ENCODE measurements at regions of chr14 and their contacts with region 1.

Region 1: GRCh38 chr14:54025661-54026060 is 69.0 kb upstream of the BMP4 start:
- DNase-seq: no peak
- H3K4me3 ChIP-seq: no peak overlapping the region
- H3K27ac ChIP-seq: no peak overlapping the region
- H3K27me3 ChIP-seq: no peaks in the 10 kb centered on the region
- CTCF ChIP-seq: peak; percentile 46

Region 2: DNA sequence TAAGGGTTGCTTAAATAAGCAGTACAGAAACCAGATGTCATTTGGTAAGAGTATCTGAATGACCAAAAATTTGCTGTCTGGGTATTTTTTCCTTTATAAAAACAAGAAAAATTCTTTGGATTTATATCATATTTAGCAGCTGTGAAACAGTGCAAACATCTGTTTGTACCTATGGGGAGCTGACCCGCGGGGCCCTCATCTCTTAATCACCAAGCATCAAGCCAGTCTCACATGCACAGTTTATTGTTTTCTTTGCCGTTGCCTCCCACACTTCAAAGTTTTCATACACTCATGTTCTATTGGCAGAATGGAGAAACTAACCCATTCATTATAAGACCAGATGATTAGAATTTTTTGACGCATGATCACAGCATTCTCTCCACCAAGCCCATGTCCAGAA is 211.3 kb before region 1 on chr14:
- CTCF ChIA-PET with region 1: no interaction called
- POLR2A ChIA-PET with region 1: no interaction called
- DNase-seq: no peak
- H3K4me3 ChIP-seq: no peak overlapping the region
- H3K27ac ChIP-seq: no peak overlapping the region
- H3K27me3 ChIP-seq: peaks cover under 1% of the 10 kb centered on the region
- CTCF ChIP-seq: no peak

Region 3: DNA sequence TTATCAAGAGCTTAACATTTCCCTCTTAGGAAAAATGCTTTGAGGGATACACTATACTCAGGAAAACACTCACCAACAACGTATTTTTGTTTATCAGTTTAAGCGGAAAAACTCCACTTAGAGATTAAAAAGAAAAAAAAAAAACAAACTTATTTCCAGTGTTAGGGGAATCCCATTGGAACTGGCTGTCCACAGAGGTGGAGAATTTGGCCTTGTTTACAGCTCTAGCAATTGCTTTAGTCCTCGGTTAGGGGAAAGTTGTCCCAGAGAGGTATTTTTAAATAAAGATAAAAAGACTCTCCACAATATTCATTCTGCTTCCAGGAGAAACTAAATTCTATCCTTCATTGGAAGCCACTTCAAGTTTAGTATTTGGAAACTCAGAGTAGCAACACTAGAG is 47.5 kb before region 1 on chr14:
- CTCF ChIA-PET with region 1: no interaction called
- POLR2A ChIA-PET with region 1: no interaction called
- DNase-seq: no peak
- H3K4me3 ChIP-seq: no peak overlapping the region
- H3K27ac ChIP-seq: no peak overlapping the region
- H3K27me3 ChIP-seq: peaks cover 9% of the 10 kb centered on the region
- CTCF ChIP-seq: no peak

Region 4: GRCh38 chr14:53999061-53999488 is 26.6 kb before region 1 on chr14:
- CTCF ChIA-PET with region 1: interaction called, 10 read pairs
- POLR2A ChIA-PET with region 1: no interaction called
- DNase-seq: peak; percentile 37
- H3K4me3 ChIP-seq: no peak overlapping the region
- H3K27ac ChIP-seq: no peak overlapping the region
- H3K27me3 ChIP-seq: no peaks in the 10 kb centered on the region
- CTCF ChIP-seq: no peak

Region 5: DNA sequence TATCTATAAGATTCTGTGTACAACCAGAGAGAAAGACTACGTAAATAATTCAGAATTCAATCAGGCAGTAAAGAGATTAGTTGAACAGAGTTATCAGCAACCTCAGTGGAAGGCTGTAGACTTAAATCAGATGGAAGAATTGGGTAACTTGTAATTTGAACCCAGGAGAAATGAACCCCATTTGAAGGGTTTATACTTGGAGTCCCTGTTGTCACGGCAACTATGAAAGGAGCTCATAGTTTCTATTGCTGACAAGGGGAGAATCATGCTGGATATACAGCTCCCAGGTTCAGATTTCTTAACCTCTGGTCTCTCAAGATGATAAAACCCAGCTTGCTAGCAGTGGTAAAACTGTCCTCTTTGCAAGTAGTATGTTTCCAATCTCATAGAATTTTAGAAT is 14.7 kb before region 1 on chr14:
- CTCF ChIA-PET with region 1: no interaction called
- POLR2A ChIA-PET with region 1: no interaction called
- DNase-seq: no peak
- H3K4me3 ChIP-seq: no peak overlapping the region
- H3K27ac ChIP-seq: no peak overlapping the region
- H3K27me3 ChIP-seq: peaks cover 3% of the 10 kb centered on the region
- CTCF ChIP-seq: no peak

Region 6: GRCh38 chr14:54166049-54166950 is 140.6 kb after region 1 on chr14:
- CTCF ChIA-PET with region 1: no interaction called
- POLR2A ChIA-PET with region 1: no interaction called
- DNase-seq: no peak
- H3K4me3 ChIP-seq: no peak overlapping the region
- H3K27ac ChIP-seq: no peak overlapping the region
- H3K27me3 ChIP-seq: peaks cover 17% of the 10 kb centered on the region
- CTCF ChIP-seq: no peak

Measured in AG04450 (cell line).